Activated CD4-positive, alpha-beta memory T cell treated with anti-CD3 and anti-CD28 coated beads for 36 hours (primary cell): ENCODE measurements at regions of chr3 and their contacts with region 1.

Region 1: GRCh38 chr3:44761424-44762169 is at the starts of genes KIAA1143 and KIF15:
- DNase-seq: peak; percentile 99
- H3K4me3 Mint-ChIP-seq: peak within 1 kb of the TSS; percentile 92
- H3K27ac Mint-ChIP-seq: peak within 1 kb of the TSS; percentile 77
- H3K4me1 Mint-ChIP-seq: peaks cover 32% of the 10 kb centered on the region
- H3K27me3 Mint-ChIP-seq: no peaks in the 10 kb centered on the region
- total RNA-seq, gene KIAA1143: 32.5 to 38.6 TPM
- total RNA-seq, gene KIF15: 41.0 to 45.1 TPM

Region 2: DNA sequence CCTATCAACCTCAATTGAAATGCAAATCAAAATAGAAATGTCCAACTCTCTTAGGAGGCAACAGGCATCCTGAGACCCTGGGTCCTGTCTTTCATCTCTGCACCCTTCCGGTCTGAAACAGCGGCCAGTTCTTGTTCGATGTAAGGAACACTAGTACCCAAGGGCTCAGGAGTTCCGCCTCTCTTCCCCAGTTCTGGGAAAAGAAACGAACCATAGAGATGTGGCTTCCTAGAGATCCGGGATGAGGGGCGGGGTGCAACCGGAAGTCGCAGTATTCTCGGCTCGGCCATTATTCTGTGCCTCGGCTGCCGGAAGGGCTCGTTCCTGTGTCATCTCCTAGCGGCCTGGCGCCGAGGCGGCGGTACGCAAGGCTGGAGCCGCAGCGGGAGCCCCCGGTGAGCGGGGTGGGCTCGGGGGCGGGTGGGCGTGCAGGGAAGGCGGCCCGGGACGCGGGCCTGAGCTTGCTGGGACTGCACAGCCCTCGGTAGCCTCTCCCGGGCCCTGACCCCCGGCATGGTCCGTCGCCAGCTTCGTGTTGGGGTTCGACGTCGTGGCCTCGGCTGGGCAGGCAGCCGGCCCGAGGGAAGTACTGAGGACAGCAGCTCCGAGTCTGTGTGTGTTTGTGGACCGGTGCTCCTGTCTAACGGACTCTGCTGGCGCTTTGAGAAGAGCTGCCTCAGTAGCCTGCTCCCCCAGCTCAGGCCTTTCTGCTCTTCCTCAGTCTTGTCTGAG is 136.7 kb before region 1 on chr3 and contains the start of gene ZNF197:
- CTCF ChIA-PET with region 1: no interaction called
- POLR2A ChIA-PET with region 1: interaction called, 8 read pairs
- intact Hi-C with region 1: loop called (anchors 2 kb)
- DNase-seq: peak; percentile 78
- H3K4me3 Mint-ChIP-seq: peak within 1 kb of the TSS; percentile 80
- H3K27ac Mint-ChIP-seq: peak within 1 kb of the TSS; percentile 47
- H3K4me1 Mint-ChIP-seq: peaks cover 20% of the 10 kb centered on the region
- H3K27me3 Mint-ChIP-seq: no peaks in the 10 kb centered on the region
- total RNA-seq, gene ZNF197: 9.1 to 9.9 TPM

Region 3: GRCh38 chr3:44729384-44729910 is 32.1 kb before region 1 on chr3 and contains the start of gene ZNF501:
- CTCF ChIA-PET with region 1: no interaction called
- POLR2A ChIA-PET with region 1: interaction called, 11 read pairs
- intact Hi-C with region 1: loop called (anchors 2 kb)
- DNase-seq: peak; percentile 92
- H3K4me3 Mint-ChIP-seq: peak within 1 kb of the TSS; percentile 91
- H3K27ac Mint-ChIP-seq: peak within 1 kb of the TSS; percentile 10
- H3K4me1 Mint-ChIP-seq: peaks cover 10% of the 10 kb centered on the region
- H3K27me3 Mint-ChIP-seq: no peaks in the 10 kb centered on the region
- total RNA-seq, gene ZNF501: 1.5 to 2.6 TPM

Region 4: GRCh38 chr3:44861412-44862220 is 100.0 kb after region 1 on chr3 and contains the start of gene TMEM42:
- CTCF ChIA-PET with region 1: no interaction called
- POLR2A ChIA-PET with region 1: interaction called, 3 read pairs
- intact Hi-C with region 1: loop called (anchors 1 kb)
- DNase-seq: peak; percentile 91
- H3K4me3 Mint-ChIP-seq: peak within 1 kb of the TSS; percentile 82
- H3K27ac Mint-ChIP-seq: peak within 1 kb of the TSS; percentile 82
- H3K4me1 Mint-ChIP-seq: peaks cover 35% of the 10 kb centered on the region
- H3K27me3 Mint-ChIP-seq: no peaks in the 10 kb centered on the region
- total RNA-seq, gene TMEM42: 13.0 to 13.5 TPM

Region 5: GRCh38 chr3:44913868-44914468 is 152.4 kb after region 1 on chr3:
- CTCF ChIA-PET with region 1: interaction called, 9 read pairs
- POLR2A ChIA-PET with region 1: no interaction called
- intact Hi-C with region 1: loop called (anchors 5 kb)
- DNase-seq: peak; percentile 73
- H3K4me3 Mint-ChIP-seq: no peak overlapping the region
- H3K27ac Mint-ChIP-seq: no peak overlapping the region
- H3K4me1 Mint-ChIP-seq: no peaks in the 10 kb centered on the region
- H3K27me3 Mint-ChIP-seq: peaks cover 23% of the 10 kb centered on the region